K562 (cell line): ENCODE measurements at regions of chr6 and their contacts with region 1.

Region 1: DNA sequence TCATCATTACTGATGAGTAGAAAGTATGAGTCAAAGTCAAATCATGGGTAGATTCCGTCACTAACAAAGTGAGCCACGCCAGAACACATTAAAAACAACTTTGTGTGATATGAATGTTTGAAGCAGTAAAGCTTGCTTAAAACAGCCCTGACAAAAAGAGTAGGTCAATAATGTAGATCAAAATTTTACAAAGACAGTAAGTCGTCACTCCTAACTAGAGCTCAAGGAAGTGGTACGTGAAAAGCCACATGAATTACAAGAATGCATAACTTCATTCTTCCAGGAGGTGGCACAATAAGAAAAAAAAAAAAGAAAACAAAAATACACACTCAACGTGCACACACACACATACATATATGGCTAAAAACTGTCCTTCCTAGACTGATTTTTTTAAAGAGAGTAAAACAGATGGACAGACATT is 69.9 kb downstream of the HACE1 start:
- DNase-seq: peak in 3 of 4 experiments; percentile 13 to 52 (median 17)
- ATAC-seq: peak; percentile 92
- H3K4me3 ChIP-seq: no peak overlapping the region
- H3K27ac ChIP-seq: no peak overlapping the region
- H3K4me1 ChIP-seq: no peaks in the 10 kb centered on the region
- H3K27me3 ChIP-seq: no peaks in the 10 kb centered on the region
- CTCF ChIP-seq: peak; percentile 22 to 56 (median 41); a peak in 3 of 6 replicates
- EP300 ChIP-seq: no peak
- POLR2A ChIP-seq: no peak
- RAD21 ChIP-seq: peak; percentile 17 to 55; a peak in 2 of 4 replicates

Region 2: DNA sequence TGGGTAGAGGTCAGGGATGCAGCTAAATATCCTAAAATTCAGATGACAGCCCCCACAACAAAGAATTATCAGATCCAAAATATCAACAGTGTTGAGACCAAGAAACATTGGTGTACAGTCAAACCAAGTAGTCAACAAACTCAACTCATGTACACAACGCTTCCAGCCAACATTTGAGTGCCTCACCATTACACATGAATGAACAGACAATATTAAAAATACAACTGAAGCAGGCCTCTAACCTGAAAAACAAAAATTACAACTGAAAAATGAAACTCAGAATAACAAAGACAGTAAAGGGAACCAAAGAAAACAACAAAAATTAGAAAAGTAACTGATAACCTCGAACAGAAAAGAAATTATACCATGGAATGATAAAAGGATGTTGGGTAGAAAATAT is 23.8 kb after region 1 on chr6:
- CTCF ChIA-PET with region 1: no interaction called
- POLR2A ChIA-PET with region 1: no interaction called
- in situ Hi-C with region 1: no loop called
- intact Hi-C with region 1: no loop called
- DNase-seq: no peak
- ATAC-seq: no peak
- H3K4me3 ChIP-seq: no peak overlapping the region
- H3K27ac ChIP-seq: no peak overlapping the region
- H3K4me1 ChIP-seq: no peaks in the 10 kb centered on the region
- H3K27me3 ChIP-seq: no peaks in the 10 kb centered on the region
- CTCF ChIP-seq: no peak
- EP300 ChIP-seq: no peak
- POLR2A ChIP-seq: no peak
- RAD21 ChIP-seq: no peak

Region 3: DNA sequence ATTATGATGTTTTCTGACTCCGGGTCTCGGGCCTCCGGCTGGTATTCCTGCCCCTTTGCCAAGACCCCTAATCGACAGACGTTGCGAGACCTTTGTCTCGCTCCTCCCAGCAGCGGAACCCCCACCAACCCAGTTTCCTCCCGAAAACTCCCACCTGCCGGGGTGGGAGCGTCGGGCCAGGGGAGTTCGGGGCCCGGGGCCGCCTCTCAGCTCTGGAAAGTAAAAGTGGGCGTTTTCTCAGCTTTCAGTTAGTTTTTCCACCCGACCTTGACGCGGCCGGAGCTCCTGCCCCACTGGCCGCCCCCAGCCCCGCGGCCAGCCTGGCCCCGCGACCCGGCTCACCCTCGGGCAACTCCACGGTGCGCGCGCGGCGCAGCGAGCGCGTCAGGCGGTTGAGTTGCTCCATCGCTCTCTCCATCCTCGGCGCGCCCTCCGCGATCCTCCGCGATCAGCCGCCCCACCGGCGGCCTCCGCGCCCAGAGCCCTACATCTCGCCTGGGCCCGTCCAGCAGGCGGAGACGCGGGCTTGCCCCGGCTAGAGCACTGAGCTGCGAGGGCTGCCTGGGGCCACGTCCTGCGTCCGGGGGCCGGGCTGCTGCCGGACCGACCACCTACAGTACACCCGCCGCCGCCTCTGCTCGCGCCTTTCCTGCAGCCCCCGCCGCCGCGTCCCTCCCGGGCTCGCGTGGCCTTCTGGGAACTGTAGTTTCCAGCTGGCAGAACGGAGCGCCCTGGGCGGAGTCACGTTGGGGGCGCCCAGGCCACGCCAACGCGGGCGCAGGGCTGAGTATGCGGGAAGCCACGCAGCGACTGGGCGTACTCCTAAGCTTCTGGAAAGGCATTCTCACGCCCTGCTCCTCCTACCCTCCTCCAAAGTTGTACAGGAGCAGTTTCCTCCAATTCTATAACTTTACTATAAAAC is 69.7 kb after region 1 on chr6 and contains the start of gene HACE1:
- CTCF ChIA-PET with region 1: no interaction called
- POLR2A ChIA-PET with region 1: no interaction called
- in situ Hi-C with region 1: no loop called
- intact Hi-C with region 1: loop called (anchors 5 kb)
- DNase-seq: peak; percentile 82 to 96 (median 88)
- ATAC-seq: peak; percentile 99
- H3K4me3 ChIP-seq: peak within 1 kb of the TSS; percentile 89
- H3K27ac ChIP-seq: peak within 1 kb of the TSS; percentile 50
- H3K4me1 ChIP-seq: peaks cover 0 to 10% of the 10 kb centered on the region in 2 experiments; a peak in 2 of 5 replicates
- H3K27me3 ChIP-seq: peaks cover 0 to 6% of the 10 kb centered on the region in 2 experiments; a peak in 2 of 5 replicates
- CTCF ChIP-seq: peak in 1 of 3 experiments; percentile 38; a peak in 2 of 6 replicates
- EP300 ChIP-seq: no peak
- POLR2A ChIP-seq: peak; percentile 74
- RAD21 ChIP-seq: no peak; a peak in 1 of 4 replicates
- polyA plus RNA-seq, gene HACE1: 3.6 to 4.9 TPM

Region 4: DNA sequence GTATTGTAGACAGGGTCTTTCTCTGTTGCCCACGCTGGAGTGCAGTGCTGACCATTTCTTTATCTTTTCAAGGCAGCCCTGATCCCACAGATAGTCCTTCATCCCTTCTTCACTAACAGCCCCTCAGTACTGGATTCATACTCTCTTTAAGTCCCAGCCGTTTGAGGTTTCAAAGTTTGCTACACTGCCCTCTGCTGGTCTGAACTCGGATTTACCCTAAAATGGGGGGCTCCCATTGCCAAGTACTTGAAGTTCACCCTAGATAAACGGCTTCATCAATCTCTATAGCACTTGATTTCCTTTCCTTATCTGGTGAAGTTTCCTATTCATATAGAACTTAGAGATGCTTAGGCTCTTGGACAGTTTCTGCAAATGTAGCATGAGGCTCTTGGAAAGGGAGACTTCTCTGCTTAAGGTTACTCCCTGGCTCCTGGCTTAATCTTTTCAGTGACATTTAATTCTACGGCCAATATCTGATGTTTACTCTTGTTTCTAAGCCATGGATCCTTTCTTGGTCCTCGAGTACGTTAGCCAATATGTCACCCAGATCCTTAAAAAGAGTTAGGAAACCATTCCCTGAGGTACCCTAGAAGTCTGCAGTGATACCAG is 634.5 kb after region 1 on chr6:
- CTCF ChIA-PET with region 1: no interaction called
- POLR2A ChIA-PET with region 1: no interaction called
- in situ Hi-C with region 1: no loop called
- intact Hi-C with region 1: loop called (anchors 5 kb)
- DNase-seq: peak; percentile 67 to 72 (median 68)
- ATAC-seq: peak; percentile 95
- H3K4me3 ChIP-seq: no peak overlapping the region
- H3K27ac ChIP-seq: no peak overlapping the region
- H3K4me1 ChIP-seq: no peaks in the 10 kb centered on the region
- H3K27me3 ChIP-seq: peaks cover 0 to 4% of the 10 kb centered on the region in 2 experiments; a peak in 1 of 5 replicates
- CTCF ChIP-seq: peak; percentile 56 to 70 (median 69)
- EP300 ChIP-seq: no peak
- POLR2A ChIP-seq: no peak
- RAD21 ChIP-seq: peak; percentile 50 to 66